ENCODE measurements at regions of chr14 and their contacts with region 1.

Region 1: GRCh38 chr14:90235179-90235976 is 21.0 kb upstream of the PSMC1 start:
- DNase-seq: no peak
- H3K4me3 ChIP-seq: no peak overlapping the region
- H3K27ac ChIP-seq: no peak overlapping the region
- H3K4me1 ChIP-seq: peaks cover 0 to 15% (median 3%) of the 10 kb centered on the region in 3 donors
- H3K27me3 ChIP-seq: peaks cover 0 to 44% (median 0%) of the 10 kb centered on the region in 4 donors
- CTCF ChIP-seq: peak; percentile 84 to 97 (median 94)
- POLR2A ChIP-seq: no peak

Region 2: DNA sequence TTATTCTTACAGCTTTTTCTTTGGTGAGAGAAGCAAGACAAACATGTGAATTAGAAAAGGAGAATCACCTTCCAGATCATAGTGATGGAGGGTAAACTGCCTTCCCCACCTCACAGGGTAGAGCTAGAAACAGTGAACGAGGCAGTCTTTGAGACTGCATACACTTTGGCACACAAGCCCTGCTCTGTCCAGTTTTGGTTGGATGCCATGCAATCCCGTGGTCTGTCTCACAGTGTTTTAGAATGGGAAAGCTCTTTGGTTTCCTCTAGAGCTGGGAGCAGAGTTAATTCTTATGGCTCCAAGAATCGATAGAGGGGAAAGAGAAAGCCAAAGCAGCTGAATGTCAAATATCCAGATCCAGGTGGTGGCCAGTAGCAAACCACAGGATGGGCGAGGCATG is 257.7 kb before region 1 on chr14:
- intact Hi-C with region 1: loop called (anchors 5 kb)
- DNase-seq: no peak
- H3K4me3 ChIP-seq: no peak overlapping the region
- H3K27ac ChIP-seq: no peak overlapping the region
- H3K4me1 ChIP-seq: no peaks in the 10 kb centered on the region
- H3K27me3 ChIP-seq: no peaks in the 10 kb centered on the region
- CTCF ChIP-seq: no peak
- POLR2A ChIP-seq: no peak

Region 3: DNA sequence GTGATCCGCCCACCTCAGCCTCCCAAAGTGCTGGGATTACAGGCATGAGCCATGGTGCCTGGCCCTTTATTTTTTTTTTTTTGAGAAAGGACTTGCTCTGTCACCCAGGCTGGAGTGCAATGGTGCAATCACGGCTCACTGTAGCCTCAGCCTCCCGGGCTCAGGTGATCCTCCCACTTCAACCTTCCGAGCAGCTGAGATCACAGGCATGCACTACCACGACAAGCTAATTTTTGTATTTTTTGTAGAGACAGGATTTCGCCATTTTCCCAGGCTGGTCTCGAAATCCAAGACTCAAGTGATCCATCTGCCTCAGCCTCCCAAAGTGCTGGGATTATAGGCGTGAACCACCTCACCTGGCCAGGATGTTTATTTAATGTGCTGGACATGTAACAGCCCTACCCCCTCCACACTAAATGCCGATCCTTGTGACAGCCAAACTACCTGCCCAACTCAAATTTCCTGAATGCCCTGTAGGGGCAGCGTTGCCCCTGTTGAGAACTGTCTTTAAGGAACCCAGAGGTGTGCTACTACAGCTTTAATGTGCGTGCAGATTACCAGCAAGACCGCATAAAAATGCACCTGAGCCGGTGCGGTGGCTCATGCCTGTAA is 125.6 kb before region 1 on chr14:
- intact Hi-C with region 1: no loop called
- DNase-seq: no peak
- H3K4me3 ChIP-seq: no peak overlapping the region
- H3K27ac ChIP-seq: no peak overlapping the region
- H3K4me1 ChIP-seq: peaks cover 0 to 5% (median 0%) of the 10 kb centered on the region in 3 donors
- H3K27me3 ChIP-seq: peaks cover 0 to 45% (median 0%) of the 10 kb centered on the region in 4 donors
- CTCF ChIP-seq: no peak
- POLR2A ChIP-seq: no peak

Region 4: DNA sequence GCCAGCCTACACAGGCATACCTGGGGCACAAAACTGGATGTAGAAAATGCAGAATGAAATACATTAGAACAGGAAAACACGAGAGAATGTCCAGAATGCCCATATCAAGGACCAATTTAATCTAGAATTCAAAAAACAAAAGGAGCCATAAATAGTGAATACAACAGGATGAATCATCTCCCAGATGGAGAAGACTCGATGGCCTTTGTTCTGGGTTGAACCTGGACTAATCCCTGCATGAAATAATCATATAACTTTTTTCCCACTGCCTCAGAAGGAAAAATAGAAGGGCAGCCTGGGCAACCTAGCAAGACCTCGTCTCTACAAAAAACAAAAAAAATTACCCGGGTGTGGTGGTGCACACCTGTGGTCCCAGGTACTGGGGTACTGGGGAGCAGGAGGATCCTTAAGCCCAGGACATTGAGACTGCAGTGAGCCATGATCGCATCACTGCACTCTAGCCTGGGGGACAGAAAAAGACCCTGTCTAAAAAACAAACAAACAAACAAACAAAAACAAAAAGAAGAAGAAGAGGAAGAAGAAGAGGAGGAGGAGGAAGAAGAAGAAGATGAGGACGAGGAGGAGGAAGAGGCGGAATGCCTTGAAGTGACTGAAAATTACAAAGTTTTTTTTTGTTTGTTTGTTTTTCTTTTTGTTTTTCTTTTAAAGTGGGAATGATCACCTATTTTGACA is 126.6 kb after region 1 on chr14:
- intact Hi-C with region 1: no loop called
- DNase-seq: no peak
- H3K4me3 ChIP-seq: no peak overlapping the region
- H3K27ac ChIP-seq: no peak overlapping the region
- H3K4me1 ChIP-seq: no peaks in the 10 kb centered on the region
- H3K27me3 ChIP-seq: no peaks in the 10 kb centered on the region
- CTCF ChIP-seq: no peak
- POLR2A ChIP-seq: no peak